HEK293 (cell line): ENCODE measurements at regions of chr2 and their contacts with region 1.

Region 1: DNA sequence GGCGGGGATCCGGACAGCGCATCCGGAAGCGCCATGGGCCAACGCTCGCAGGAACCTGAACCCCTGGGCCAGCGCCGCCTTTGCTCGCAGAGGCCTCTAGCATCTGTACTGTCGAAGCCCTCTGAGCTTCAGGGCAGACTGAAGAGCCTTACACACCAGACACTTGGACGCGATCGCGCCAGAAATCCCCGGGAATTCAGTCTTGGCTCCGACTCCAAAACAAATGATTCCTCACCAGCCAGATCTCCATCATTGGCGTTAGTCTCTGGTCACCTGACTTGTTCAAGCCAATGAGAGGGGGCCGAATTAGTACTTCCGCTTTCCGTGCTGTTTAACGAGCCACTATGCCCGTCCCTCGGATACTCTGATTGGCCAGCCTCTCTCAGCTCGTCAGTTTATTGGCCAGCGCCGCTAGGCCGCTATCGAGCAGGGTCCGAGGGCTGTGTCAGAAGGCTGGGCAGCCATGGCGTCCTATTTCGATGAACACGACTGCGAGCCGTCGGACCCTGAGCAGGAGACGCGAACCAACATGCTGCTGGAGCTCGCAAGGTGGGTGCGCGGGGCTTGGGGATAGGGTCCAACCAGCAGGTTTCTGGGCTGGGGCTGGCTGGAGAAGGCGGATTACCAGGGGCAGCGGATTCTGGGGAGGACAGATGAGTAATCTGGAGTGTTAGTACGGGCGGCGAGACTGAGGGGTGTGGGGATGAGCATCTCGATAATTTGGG is at the start of gene RNF181:
- H3K4me3 ChIP-seq: peak within 1 kb of the TSS; percentile 79
- H3K27ac ChIP-seq: peak within 1 kb of the TSS; percentile 77
- H3K4me1 ChIP-seq: 0 out of 2 replicates have a peak, but pooled peaks cover 3% of the 10 kb centered on the region
- CTCF ChIP-seq: no peak

Region 2: DNA sequence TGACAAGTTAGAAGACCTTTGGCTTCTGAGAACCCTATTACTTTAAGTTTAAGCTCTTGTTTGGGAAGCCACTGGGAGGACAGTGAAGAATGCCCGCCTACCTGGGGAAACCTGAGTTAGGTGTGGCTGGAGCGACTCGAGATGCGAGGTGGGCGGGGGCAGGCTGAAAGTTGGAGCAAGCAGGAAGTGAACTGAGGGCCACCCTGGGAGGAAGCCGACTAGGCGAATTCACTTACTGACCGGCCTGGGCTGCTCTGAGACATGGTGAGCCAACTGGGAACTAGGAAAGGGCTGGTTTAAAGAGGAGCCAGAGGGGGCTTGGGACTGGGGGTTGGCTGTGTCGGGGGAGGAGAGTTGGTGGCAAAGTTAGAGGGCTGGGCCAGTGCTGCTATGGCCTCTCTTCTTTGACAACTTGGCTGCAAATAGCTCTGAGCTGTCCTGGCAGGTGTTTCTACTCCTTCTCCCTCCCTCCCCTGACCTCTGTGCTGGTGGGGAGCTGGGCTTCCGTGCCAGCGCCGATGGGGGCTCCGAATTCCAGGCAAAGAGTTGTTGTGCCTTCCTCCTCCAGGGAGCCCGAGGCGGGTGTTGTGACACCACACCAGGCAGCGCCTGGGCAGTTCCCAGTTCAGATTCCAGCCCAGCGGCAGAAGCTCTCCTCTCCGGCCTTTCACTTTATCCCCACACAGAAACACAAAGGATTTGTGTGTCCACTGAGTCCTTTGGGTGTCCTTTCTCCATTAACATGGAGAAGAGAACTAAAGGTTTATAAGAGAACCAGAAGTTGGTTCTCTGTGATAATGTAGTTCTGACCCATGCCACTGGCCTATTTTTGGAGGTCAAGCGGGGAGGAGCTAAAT is 17.8 kb before region 1 on chr2 and contains the start of gene VAMP8:
- CTCF ChIA-PET with region 1: interaction called, 3 read pairs
- POLR2A ChIA-PET with region 1: interaction called, 38 read pairs
- H3K4me3 ChIP-seq: peak within 1 kb of the TSS; percentile 55
- H3K27ac ChIP-seq: peak within 1 kb of the TSS; percentile 56
- H3K4me1 ChIP-seq: peaks cover 14% of the 10 kb centered on the region
- CTCF ChIP-seq: no peak

Region 3: DNA sequence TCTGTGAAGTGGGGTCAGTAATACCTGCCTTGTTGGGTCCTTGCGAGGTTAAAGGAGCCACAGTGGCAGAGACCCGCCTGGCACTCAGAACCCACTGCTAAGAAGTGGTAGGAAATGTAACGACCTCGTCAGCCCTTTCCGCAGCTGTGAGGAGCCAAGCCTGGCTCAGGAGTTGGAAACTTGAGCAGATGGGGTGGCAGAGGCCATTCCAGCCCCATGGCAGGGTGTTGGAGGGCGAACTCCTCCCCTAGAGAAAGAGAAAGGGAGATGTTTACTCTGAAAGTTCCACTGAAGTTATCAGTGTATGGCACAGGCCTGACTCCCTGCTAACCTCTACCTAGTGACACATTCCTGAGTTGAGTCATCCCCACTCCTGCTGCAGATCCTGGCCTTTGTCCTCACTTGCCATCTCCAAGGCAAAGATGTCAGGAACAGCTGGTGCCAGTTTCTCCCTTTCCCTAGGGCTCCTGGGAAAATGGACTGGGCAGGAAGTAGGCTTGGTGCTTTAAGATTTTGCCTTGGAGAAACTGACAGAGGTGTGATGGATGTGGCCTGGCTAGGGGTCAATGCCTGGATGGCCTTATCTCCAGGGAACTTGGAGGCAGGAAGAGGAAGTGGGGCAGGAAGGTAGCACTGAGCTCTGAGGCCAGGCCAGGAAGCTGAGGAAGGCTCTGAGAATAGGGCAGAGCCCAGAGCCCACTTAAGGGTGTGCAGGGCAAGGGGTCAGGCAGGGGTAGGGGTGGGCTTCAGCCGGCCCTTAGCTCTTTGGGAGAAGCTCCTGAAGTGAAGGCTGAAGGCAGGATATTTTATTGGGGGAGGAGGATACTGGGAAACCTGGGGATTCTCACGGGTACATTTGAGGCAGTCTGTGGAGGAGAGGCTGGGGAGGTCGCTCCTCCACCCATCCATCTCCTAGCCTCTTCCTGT is 10.3 kb before region 1 on chr2:
- CTCF ChIA-PET with region 1: no interaction called
- POLR2A ChIA-PET with region 1: interaction called, 11 read pairs
- H3K4me3 ChIP-seq: no peak overlapping the region
- H3K27ac ChIP-seq: no peak overlapping the region
- H3K4me1 ChIP-seq: no peaks in the 10 kb centered on the region
- CTCF ChIP-seq: no peak

Region 4: GRCh38 chr2:85611705-85612587 is 16.5 kb after region 1 on chr2 and contains the start of gene C2orf68:
- CTCF ChIA-PET with region 1: interaction called, 3 read pairs
- POLR2A ChIA-PET with region 1: interaction called, 43 read pairs
- H3K4me3 ChIP-seq: peak within 1 kb of the TSS; percentile 79
- H3K27ac ChIP-seq: peak within 1 kb of the TSS; percentile 89
- H3K4me1 ChIP-seq: peaks cover under 1% of the 10 kb centered on the region; the same call in 1 of the 2 replicates
- CTCF ChIP-seq: no peak